OCI-LY7 (cell line): ENCODE measurements at regions of chrX and their contacts with region 1.

Region 1: DNA sequence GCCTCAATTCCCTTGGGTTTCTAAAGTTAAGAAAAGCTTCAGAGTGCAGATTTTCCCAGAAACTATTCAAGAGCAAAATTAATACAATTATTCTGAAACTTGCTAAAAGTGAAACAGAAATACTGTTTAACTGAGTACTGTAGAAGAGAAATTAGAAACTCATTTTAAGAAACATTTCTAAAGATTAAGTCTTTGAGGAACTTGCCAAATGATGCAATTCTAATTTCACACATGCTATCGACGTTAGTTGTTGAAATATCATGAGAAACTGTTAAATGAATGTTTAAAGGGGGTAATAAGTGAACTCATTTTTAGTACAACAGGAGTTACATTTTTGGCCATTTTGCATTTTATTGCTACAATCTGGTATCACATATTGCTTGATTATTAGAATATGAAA is 125.3 kb upstream of the MAOA start:
- DNase-seq: no peak
- H3K4me3 ChIP-seq: no peak overlapping the region
- H3K27ac ChIP-seq: no peak overlapping the region
- H3K4me1 ChIP-seq: no peaks in the 10 kb centered on the region
- CTCF ChIP-seq: no peak

Region 2: GRCh38 chrX:43188296-43188695 is 342.5 kb before region 1 on chrX:
- CTCF ChIA-PET with region 1: no interaction called
- POLR2A ChIA-PET with region 1: no interaction called
- intact Hi-C with region 1: no loop called
- DNase-seq: no peak
- H3K4me3 ChIP-seq: no peak overlapping the region
- H3K27ac ChIP-seq: no peak overlapping the region
- H3K4me1 ChIP-seq: peaks cover 14% of the 10 kb centered on the region
- CTCF ChIP-seq: no peak

Region 3: GRCh38 chrX:43505754-43506153 is 25.1 kb before region 1 on chrX:
- CTCF ChIA-PET with region 1: interaction called, 10 read pairs
- POLR2A ChIA-PET with region 1: interaction called, 3 read pairs
- intact Hi-C with region 1: no loop called
- DNase-seq: no peak
- H3K4me3 ChIP-seq: no peak overlapping the region
- H3K27ac ChIP-seq: no peak overlapping the region
- H3K4me1 ChIP-seq: no peaks in the 10 kb centered on the region
- CTCF ChIP-seq: no peak

Region 4: DNA sequence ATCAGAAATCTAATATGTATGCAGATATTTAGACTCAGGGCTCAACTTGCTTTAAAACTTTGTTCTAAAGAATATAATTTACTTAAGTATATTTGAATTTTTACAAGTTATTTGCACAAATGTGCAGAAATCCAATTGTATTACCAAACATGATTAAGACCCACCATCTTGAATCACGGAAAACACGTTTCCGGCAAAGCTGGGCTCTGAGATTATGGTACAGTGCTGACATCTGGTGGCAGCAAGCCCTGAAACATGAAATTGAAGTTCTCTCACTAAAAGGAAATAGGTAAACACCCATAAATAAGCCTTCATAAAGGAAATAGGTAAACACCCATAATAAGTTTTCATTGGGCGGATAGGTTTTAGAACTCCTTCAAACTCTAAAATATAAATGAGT is 27.0 kb after region 1 on chrX:
- CTCF ChIA-PET with region 1: no interaction called
- POLR2A ChIA-PET with region 1: no interaction called
- intact Hi-C with region 1: no loop called
- DNase-seq: peak; percentile 72
- H3K4me3 ChIP-seq: no peak overlapping the region
- H3K27ac ChIP-seq: no peak overlapping the region
- H3K4me1 ChIP-seq: no peaks in the 10 kb centered on the region
- CTCF ChIP-seq: peak; percentile 80